Naive thymus-derived CD4-positive, alpha-beta T cell (primary cell): ENCODE measurements at regions of chr21 and their contacts with region 1.

Region 1: GRCh38 chr21:38355992-38356797 is 99.4 kb downstream of the KCNJ15 start:
- DNase-seq: peak; percentile 40 to 83 (median 72)
- ATAC-seq: peak; percentile 84
- H3K4me3 ChIP-seq: no peak overlapping the region
- H3K4me3 Mint-ChIP-seq: no peak overlapping the region
- H3K27ac ChIP-seq: no peak overlapping the region
- H3K27ac Mint-ChIP-seq: no peak overlapping the region
- H3K4me1 ChIP-seq: peaks cover 0 to 8% of the 10 kb centered on the region in 2 donors
- H3K4me1 Mint-ChIP-seq: peaks cover 5 to 15% (median 10%) of the 10 kb centered on the region in 7 donors
- H3K27me3 ChIP-seq: no peaks in the 10 kb centered on the region
- H3K27me3 Mint-ChIP-seq: peaks cover 4 to 25% (median 12%) of the 10 kb centered on the region in 5 donors

Region 2: DNA sequence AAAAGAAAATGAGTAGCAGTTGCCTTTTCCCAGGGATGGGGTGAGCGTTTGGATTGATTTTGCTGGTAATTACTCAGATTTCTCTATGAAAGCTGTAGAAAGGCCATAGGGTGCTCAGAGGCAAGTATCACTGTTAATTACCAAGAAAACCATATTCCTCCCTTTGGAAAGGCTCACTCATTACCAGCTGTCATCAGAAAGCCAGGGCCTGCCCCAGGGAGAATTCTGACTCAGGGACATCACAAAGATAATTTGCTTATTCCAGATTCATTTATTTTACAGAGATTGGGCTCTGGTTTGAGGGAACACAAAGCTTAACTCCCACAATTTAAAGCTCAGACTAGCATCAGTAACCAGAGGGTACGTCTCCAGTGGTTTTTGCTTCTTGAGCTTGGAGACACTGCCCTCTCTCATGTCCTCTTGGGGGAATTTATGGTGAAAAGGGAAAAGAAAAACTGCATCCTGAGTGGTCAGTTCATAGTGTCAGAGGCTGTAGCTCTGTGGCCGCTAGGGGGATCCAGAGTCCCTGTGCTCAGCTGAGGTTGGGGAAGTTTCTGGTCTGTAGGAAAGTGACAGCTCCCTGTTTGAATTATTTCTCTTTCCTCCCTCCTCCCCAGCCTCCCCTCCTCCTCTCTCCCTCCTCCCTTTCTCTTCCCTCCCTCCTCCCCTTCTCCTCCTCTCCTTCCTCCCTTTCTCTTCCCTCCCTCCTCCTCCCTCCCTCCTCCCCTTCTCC is 644.2 kb before region 1 on chr21:
- CTCF ChIA-PET with region 1: no interaction called
- POLR2A ChIA-PET with region 1: no interaction called
- intact Hi-C with region 1: loop called in 1 of 2 experiments (anchors 1 kb)
- DNase-seq: peak in 3 of 9 donors; percentile 6 to 35 (median 21)
- ATAC-seq: peak; percentile 61
- H3K4me3 ChIP-seq: no peak overlapping the region
- H3K4me3 Mint-ChIP-seq: no peak overlapping the region
- H3K27ac ChIP-seq: no peak overlapping the region
- H3K27ac Mint-ChIP-seq: no peak overlapping the region
- H3K4me1 ChIP-seq: no peaks in the 10 kb centered on the region
- H3K4me1 Mint-ChIP-seq: no peaks in the 10 kb centered on the region
- H3K27me3 ChIP-seq: no peaks in the 10 kb centered on the region
- H3K27me3 Mint-ChIP-seq: peaks cover 21 to 57% (median 47%) of the 10 kb centered on the region in 5 donors

Region 3: GRCh38 chr21:38170280-38170679 is 185.9 kb before region 1 on chr21:
- CTCF ChIA-PET with region 1: interaction called, 17 read pairs
- POLR2A ChIA-PET with region 1: no interaction called
- intact Hi-C with region 1: loop called in 1 of 2 experiments (anchors 1 kb)
- DNase-seq: peak in 2 of 9 donors; percentile 1 to 5
- ATAC-seq: peak; percentile 51
- H3K4me3 ChIP-seq: no peak overlapping the region
- H3K4me3 Mint-ChIP-seq: no peak overlapping the region
- H3K27ac ChIP-seq: no peak overlapping the region
- H3K27ac Mint-ChIP-seq: no peak overlapping the region
- H3K4me1 ChIP-seq: no peaks in the 10 kb centered on the region
- H3K4me1 Mint-ChIP-seq: no peaks in the 10 kb centered on the region
- H3K27me3 ChIP-seq: no peaks in the 10 kb centered on the region
- H3K27me3 Mint-ChIP-seq: peaks cover 0 to 7% (median 0%) of the 10 kb centered on the region in 5 donors

Region 4: GRCh38 chr21:38236232-38236631 is 120.0 kb before region 1 on chr21:
- CTCF ChIA-PET with region 1: interaction called, 6 read pairs
- POLR2A ChIA-PET with region 1: no interaction called
- intact Hi-C with region 1: loop called in 1 of 2 experiments (anchors 1 kb)
- DNase-seq: no peak
- ATAC-seq: no peak
- H3K4me3 ChIP-seq: no peak overlapping the region
- H3K4me3 Mint-ChIP-seq: no peak overlapping the region
- H3K27ac ChIP-seq: no peak overlapping the region
- H3K27ac Mint-ChIP-seq: no peak overlapping the region
- H3K4me1 ChIP-seq: no peaks in the 10 kb centered on the region
- H3K4me1 Mint-ChIP-seq: peaks cover 0 to 5% (median 0%) of the 10 kb centered on the region in 7 donors
- H3K27me3 ChIP-seq: no peaks in the 10 kb centered on the region
- H3K27me3 Mint-ChIP-seq: no peaks in the 10 kb centered on the region

Region 5: GRCh38 chr21:38323721-38324531 is 32.3 kb before region 1 on chr21:
- CTCF ChIA-PET with region 1: interaction called, 12 read pairs
- POLR2A ChIA-PET with region 1: no interaction called
- intact Hi-C with region 1: loop called in 1 of 2 experiments (anchors 1 kb)
- DNase-seq: peak in 7 of 9 donors; percentile 51 to 79 (median 70)
- ATAC-seq: peak; percentile 97
- H3K4me3 ChIP-seq: peak overlapping the region; percentile 17
- H3K4me3 Mint-ChIP-seq: peak overlapping the region; percentile 36 to 73 (median 55)
- H3K27ac ChIP-seq: no peak overlapping the region
- H3K27ac Mint-ChIP-seq: peak overlapping the region; percentile 39 to 99 (median 92)
- H3K4me1 ChIP-seq: peaks cover 0 to 24% of the 10 kb centered on the region in 2 donors
- H3K4me1 Mint-ChIP-seq: peaks cover 17 to 44% (median 26%) of the 10 kb centered on the region in 7 donors
- H3K27me3 ChIP-seq: no peaks in the 10 kb centered on the region
- H3K27me3 Mint-ChIP-seq: peaks cover 0 to 5% (median 0%) of the 10 kb centered on the region in 5 donors

Region 6: GRCh38 chr21:38367646-38368045 is 11.5 kb after region 1 on chr21:
- CTCF ChIA-PET with region 1: no interaction called
- POLR2A ChIA-PET with region 1: no interaction called
- intact Hi-C with region 1: no loop called
- DNase-seq: no peak
- ATAC-seq: no peak
- H3K4me3 ChIP-seq: no peak overlapping the region
- H3K4me3 Mint-ChIP-seq: no peak overlapping the region
- H3K27ac ChIP-seq: no peak overlapping the region
- H3K27ac Mint-ChIP-seq: no peak overlapping the region
- H3K4me1 ChIP-seq: no peaks in the 10 kb centered on the region
- H3K4me1 Mint-ChIP-seq: no peaks in the 10 kb centered on the region
- H3K27me3 ChIP-seq: no peaks in the 10 kb centered on the region
- H3K27me3 Mint-ChIP-seq: peaks cover 0 to 4% (median 0%) of the 10 kb centered on the region in 5 donors